Activated naive CD4-positive, alpha-beta T cell treated with anti-CD3 and anti-CD28 coated beads for 36 hours (primary cell): ENCODE measurements at regions of chr1 and their contacts with region 1.

Region 1: DNA sequence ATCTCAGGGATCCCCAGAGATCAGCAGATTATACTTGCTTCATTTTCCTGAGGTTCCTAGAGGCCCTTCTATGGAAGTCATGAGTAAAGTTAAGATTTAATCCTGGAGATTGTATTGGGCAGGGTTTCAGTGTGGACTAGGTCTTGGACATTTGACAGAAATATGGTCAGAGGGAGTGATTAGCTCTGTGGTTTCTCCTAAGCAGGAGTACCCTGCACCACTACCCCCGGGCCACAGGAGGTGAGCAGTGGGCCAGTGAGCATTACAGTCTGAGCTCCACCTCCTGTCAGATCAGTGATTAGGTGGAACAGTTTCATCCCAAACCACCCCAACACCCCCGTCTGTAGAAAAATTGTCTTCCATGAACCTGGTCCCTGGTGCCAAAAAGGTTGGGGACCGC is 43.2 kb downstream of the PHACTR4 start:
- DNase-seq: no peak
- H3K4me3 Mint-ChIP-seq: no peak overlapping the region
- H3K27ac Mint-ChIP-seq: no peak overlapping the region
- H3K4me1 Mint-ChIP-seq: peaks cover 12% of the 10 kb centered on the region
- H3K27me3 Mint-ChIP-seq: no peaks in the 10 kb centered on the region

Region 2: DNA sequence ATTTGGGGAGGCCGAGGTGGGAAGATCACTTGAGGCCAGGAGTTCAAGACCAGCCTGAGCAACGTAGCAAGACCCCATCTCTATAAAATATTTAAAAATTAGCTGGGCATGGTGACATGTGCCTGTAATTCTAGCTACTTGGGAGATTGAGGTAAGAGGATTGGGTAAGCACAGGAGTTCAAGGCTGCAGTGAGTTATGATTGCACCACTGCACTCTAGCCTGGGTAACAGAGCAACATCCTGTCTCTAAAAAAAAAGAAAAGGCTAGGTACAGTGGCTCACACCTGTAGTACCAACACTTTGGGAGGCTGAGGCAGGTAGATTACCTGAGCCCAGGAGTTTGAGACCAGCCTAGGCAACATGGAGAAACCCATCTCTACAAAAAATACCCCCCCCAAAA is 57.4 kb after region 1 on chr1:
- CTCF ChIA-PET with region 1: interaction called, 3 read pairs
- intact Hi-C with region 1: loop called (anchors 1 kb)
- DNase-seq: no peak
- H3K4me3 Mint-ChIP-seq: no peak overlapping the region
- H3K27ac Mint-ChIP-seq: no peak overlapping the region
- H3K4me1 Mint-ChIP-seq: peaks cover 2% of the 10 kb centered on the region
- H3K27me3 Mint-ChIP-seq: no peaks in the 10 kb centered on the region

Region 3: GRCh38 chr1:28518000-28518744 is 105.4 kb after region 1 on chr1:
- CTCF ChIA-PET with region 1: no interaction called
- intact Hi-C with region 1: no loop called
- DNase-seq: peak; percentile 92
- H3K4me3 Mint-ChIP-seq: peak overlapping the region; percentile 90
- H3K27ac Mint-ChIP-seq: peak overlapping the region; percentile 91
- H3K4me1 Mint-ChIP-seq: peaks cover 38% of the 10 kb centered on the region
- H3K27me3 Mint-ChIP-seq: no peaks in the 10 kb centered on the region

Region 4: DNA sequence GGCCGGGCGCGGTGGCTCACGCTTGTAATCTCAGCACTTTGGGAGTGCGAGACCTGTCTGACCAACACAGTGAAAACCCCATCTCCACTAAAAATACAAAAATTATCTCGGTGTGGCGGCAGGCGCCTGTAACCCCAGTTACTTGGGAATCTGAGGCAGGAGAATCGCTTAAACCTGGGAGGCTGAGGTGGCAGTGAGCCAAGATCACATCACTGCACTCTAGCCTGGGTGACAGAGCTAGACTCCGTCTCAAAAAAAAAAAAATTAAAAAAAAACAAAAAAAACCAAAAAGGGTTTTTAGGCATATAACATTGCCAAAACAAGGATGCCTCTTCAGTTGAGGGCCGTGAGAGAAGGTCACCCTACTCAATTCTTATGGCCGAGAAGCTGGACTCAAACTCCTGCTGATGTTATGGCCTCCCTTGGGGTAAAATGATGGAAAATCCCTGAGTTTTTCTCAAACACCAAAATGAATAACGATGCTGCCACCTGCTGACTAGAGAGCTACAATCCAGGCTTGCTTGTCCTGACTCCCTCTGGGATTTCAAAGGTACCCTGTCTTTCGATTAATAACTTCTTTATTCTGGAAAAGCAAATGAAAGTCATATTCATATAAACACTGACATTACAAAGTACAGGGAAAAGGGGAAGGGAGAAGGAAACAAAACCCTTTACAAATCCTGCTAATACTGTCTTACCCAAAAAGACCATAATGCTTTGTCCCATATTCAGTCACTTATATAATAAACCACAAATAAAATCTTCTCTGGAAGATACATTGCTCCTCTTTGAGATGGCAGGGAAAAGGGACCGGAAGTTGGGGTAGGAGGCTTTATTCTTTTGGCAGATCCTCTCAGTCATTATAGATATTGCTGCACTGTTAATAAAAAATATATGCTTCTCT is 190.1 kb after region 1 on chr1:
- CTCF ChIA-PET with region 1: interaction called, 5 read pairs
- intact Hi-C with region 1: loop called (anchors 1 kb)
- DNase-seq: peak; percentile 69
- H3K4me3 Mint-ChIP-seq: no peak overlapping the region
- H3K27ac Mint-ChIP-seq: peak overlapping the region; percentile 24
- H3K4me1 Mint-ChIP-seq: no peaks in the 10 kb centered on the region
- H3K27me3 Mint-ChIP-seq: no peaks in the 10 kb centered on the region